Activated CD8-positive, alpha-beta T cell treated with anti-CD3 and anti-CD28 coated beads, Interleukin-2, amount 10 ng/mL, durations not matched to agents 7 days and 5 days (primary cell): ENCODE measurements at regions of chr16 and their contacts with region 1.

Region 1: DNA sequence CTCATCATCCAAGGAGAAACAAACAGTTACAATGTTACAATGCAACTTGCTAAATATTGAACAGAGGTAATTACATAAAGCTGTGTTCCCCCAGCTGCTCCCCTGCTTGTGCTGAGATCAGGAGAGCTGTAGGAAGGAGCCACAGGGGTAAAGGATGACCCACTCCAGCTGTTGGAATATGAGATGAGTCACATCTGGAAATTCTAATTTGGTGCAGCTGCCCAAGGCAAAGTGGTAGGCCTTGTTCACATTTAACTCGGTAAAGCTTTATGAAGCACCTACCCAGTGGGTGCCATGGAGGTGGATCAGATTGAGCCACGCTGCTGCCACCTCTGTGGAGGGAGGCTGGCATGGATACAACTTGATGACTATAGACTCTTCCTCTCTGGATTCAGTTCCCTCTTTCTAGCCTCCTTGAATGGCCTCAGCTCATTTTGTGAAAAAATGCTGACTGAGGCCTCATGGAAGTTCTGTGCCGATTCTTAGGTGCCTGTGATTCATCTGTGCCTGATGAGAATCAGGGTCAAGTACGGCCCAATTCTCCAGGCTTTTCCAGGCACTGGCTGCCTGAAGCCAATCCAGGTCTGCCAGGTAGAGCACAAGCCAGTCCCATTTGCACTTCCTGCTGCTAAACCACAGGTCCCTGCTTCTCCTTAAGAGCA is 7.4 kb downstream of the ZNF689 start:
- DNase-seq: no peak
- ATAC-seq: no peak
- H3K4me3 Mint-ChIP-seq: no peak overlapping the region
- H3K27ac Mint-ChIP-seq: no peak overlapping the region
- H3K4me1 Mint-ChIP-seq: peaks cover 17% of the 10 kb centered on the region
- H3K27me3 Mint-ChIP-seq: no peaks in the 10 kb centered on the region

Region 2: GRCh38 chr16:30417529-30418349 is 185.0 kb before region 1 on chr16:
- CTCF ChIA-PET with region 1: interaction called, 10 read pairs
- POLR2A ChIA-PET with region 1: no interaction called
- DNase-seq: peak; percentile 92
- ATAC-seq: peak; percentile 88
- H3K4me3 Mint-ChIP-seq: peak overlapping the region; percentile 61
- H3K27ac Mint-ChIP-seq: peak overlapping the region; percentile 55
- H3K4me1 Mint-ChIP-seq: peaks cover 25% of the 10 kb centered on the region
- H3K27me3 Mint-ChIP-seq: no peaks in the 10 kb centered on the region

Region 3: GRCh38 chr16:30437486-30438046 is 165.2 kb before region 1 on chr16:
- CTCF ChIA-PET with region 1: interaction called, 10 read pairs
- POLR2A ChIA-PET with region 1: interaction called, 3 read pairs
- DNase-seq: no peak
- ATAC-seq: no peak
- H3K4me3 Mint-ChIP-seq: no peak overlapping the region
- H3K27ac Mint-ChIP-seq: no peak overlapping the region
- H3K4me1 Mint-ChIP-seq: peaks cover 20% of the 10 kb centered on the region
- H3K27me3 Mint-ChIP-seq: no peaks in the 10 kb centered on the region

Region 4: DNA sequence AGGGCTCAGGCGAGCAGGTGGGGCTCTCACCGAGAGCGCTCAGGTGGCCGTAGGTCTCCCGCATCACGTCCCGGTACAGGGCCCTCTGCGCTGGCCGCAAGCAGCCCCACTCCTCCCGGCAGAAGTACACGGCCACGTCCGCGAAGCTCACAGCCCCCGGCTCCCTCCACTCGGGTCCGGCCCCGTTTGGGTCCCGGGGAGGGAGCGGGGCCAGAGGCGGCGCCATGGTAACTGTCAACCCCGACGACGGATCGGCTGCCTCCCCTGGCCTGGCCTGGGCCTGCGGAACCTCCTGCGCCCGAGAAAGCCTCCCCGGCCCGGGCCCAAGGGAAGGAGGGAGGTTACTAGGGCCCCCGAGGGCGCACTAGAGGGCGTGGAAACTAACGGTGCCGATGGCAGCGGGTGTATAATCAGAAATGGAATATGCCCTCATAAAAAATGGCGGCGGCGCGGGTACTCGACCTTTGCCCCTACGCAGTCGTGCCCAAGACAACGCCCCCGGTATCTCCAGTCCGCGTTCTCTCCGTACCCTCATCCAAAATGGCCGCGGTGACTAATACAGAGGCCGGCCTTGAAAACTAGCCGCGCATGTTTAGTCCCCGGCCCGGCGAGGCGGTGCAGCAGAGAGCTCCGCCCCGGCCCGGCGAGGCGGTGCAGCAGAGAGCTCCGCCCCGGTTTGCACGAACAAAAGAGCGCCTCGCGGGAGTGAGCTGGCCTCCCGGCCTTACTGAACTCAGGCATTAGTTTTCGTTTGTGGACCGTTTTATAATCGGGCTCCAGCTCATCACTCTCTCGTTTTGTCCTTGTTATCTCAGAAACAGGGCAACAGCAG is 44.6 kb before region 1 on chr16 and contains the start of gene ZNF764:
- CTCF ChIA-PET with region 1: interaction called, 15 read pairs
- POLR2A ChIA-PET with region 1: interaction called, 3 read pairs
- DNase-seq: peak; percentile 99
- ATAC-seq: peak; percentile 96
- H3K4me3 Mint-ChIP-seq: peak within 1 kb of the TSS; percentile 87
- H3K27ac Mint-ChIP-seq: peak within 1 kb of the TSS; percentile 86
- H3K4me1 Mint-ChIP-seq: peaks cover 46% of the 10 kb centered on the region
- H3K27me3 Mint-ChIP-seq: peaks cover 3% of the 10 kb centered on the region
- total RNA-seq, gene ZNF764: 15.2 to 15.4 TPM

Region 5: GRCh38 chr16:30571695-30572600 is 30.8 kb before region 1 on chr16 and contains the start of gene ZNF688:
- CTCF ChIA-PET with region 1: interaction called, 25 read pairs
- POLR2A ChIA-PET with region 1: interaction called, 17 read pairs
- DNase-seq: peak; percentile 98
- ATAC-seq: peak; percentile 87
- H3K4me3 Mint-ChIP-seq: peak within 1 kb of the TSS; percentile 98
- H3K27ac Mint-ChIP-seq: peak within 1 kb of the TSS; percentile 94
- H3K4me1 Mint-ChIP-seq: peaks cover 48% of the 10 kb centered on the region
- H3K27me3 Mint-ChIP-seq: no peaks in the 10 kb centered on the region
- total RNA-seq, gene ZNF688: 12.5 to 13.4 TPM

Region 6: GRCh38 chr16:30585400-30586189 is 17.2 kb before region 1 on chr16 and contains the start of gene ZNF785:
- CTCF ChIA-PET with region 1: interaction called, 44 read pairs
- POLR2A ChIA-PET with region 1: interaction called, 6 read pairs
- DNase-seq: peak; percentile 98
- ATAC-seq: peak; percentile 98
- H3K4me3 Mint-ChIP-seq: peak within 1 kb of the TSS; percentile 96
- H3K27ac Mint-ChIP-seq: peak within 1 kb of the TSS; percentile 87
- H3K4me1 Mint-ChIP-seq: peaks cover 30% of the 10 kb centered on the region
- H3K27me3 Mint-ChIP-seq: no peaks in the 10 kb centered on the region
- total RNA-seq, gene ZNF785: 11.7 to 13.7 TPM

Region 7: GRCh38 chr16:30615358-30616091 is 12.8 kb after region 1 on chr16:
- CTCF ChIA-PET with region 1: interaction called, 86 read pairs
- POLR2A ChIA-PET with region 1: no interaction called
- DNase-seq: peak; percentile 83
- ATAC-seq: peak; percentile 68
- H3K4me3 Mint-ChIP-seq: no peak overlapping the region
- H3K27ac Mint-ChIP-seq: no peak overlapping the region
- H3K4me1 Mint-ChIP-seq: peaks cover 14% of the 10 kb centered on the region
- H3K27me3 Mint-ChIP-seq: peaks cover 13% of the 10 kb centered on the region